H1 (cell line): ENCODE measurements at regions of chr4 and their contacts with region 1.

Region 1: GRCh38 chr4:110344162-110344561 is 131.8 kb upstream of the ENPEP start:
- DNase-seq: no peak
- H3K4me3 ChIP-seq: no peak overlapping the region
- H3K27ac ChIP-seq: no peak overlapping the region
- H3K4me1 ChIP-seq: peaks cover 0 to 2% (median under 1%) of the 10 kb centered on the region in 4 experiments; a peak in 1 of 7 replicates
- H3K27me3 ChIP-seq: no peaks in the 10 kb centered on the region
- CTCF ChIP-seq: peak in 2 of 3 experiments; percentile 26 to 62; a peak in 2 of 4 replicates
- EP300 ChIP-seq: no peak
- POLR2A ChIP-seq: no peak
- RAD21 ChIP-seq: peak; percentile 80 to 83

Region 2: GRCh38 chr4:110005461-110006056 is 338.6 kb before region 1 on chr4:
- CTCF ChIA-PET with region 1: interaction called, 43 read pairs
- POLR2A ChIA-PET with region 1: no interaction called
- DNase-seq: no peak
- H3K4me3 ChIP-seq: no peak overlapping the region
- H3K27ac ChIP-seq: no peak overlapping the region
- H3K4me1 ChIP-seq: 0 out of 7 replicates have a peak, but pooled peaks cover 0 to 2% (median 0%) of the 10 kb centered on the region in 4 experiments
- H3K27me3 ChIP-seq: no peaks in the 10 kb centered on the region
- CTCF ChIP-seq: peak in 2 of 3 experiments; percentile 59 to 69; a peak in 2 of 4 replicates
- EP300 ChIP-seq: no peak
- POLR2A ChIP-seq: no peak
- RAD21 ChIP-seq: peak; percentile 88

Region 3: DNA sequence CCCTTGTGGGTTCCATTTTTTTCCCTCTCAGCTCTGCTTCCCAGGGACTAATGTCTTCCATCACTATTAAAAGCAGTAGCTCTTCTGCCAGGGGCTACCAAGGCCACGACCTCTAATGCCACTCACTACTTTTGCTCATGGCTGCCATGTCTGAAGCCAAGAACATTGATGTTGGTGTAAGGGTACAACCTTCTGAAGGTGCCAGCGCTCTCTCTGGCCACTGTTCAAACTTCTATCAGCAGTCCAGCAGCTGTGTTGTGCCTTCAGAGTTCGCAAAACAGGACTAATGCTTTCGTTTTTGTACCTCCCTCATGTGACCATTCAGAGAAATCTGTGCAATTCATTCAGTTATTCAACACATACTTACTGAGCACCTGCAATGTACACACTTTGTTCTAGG is 10.3 kb after region 1 on chr4:
- CTCF ChIA-PET with region 1: interaction called, 37 read pairs
- POLR2A ChIA-PET with region 1: no interaction called
- DNase-seq: no peak
- H3K4me3 ChIP-seq: no peak overlapping the region
- H3K27ac ChIP-seq: no peak overlapping the region
- H3K4me1 ChIP-seq: no peaks in the 10 kb centered on the region
- H3K27me3 ChIP-seq: no peaks in the 10 kb centered on the region
- CTCF ChIP-seq: no peak
- EP300 ChIP-seq: no peak
- POLR2A ChIP-seq: no peak
- RAD21 ChIP-seq: no peak

Region 4: GRCh38 chr4:110503270-110504083 is 159.3 kb after region 1 on chr4:
- CTCF ChIA-PET with region 1: interaction called, 497 read pairs
- POLR2A ChIA-PET with region 1: interaction called, 3 read pairs
- DNase-seq: no peak
- H3K4me3 ChIP-seq: no peak overlapping the region
- H3K27ac ChIP-seq: no peak overlapping the region
- H3K4me1 ChIP-seq: peaks cover 0 to 4% (median 0%) of the 10 kb centered on the region in 4 experiments; a peak in 2 of 7 replicates
- H3K27me3 ChIP-seq: no peaks in the 10 kb centered on the region
- CTCF ChIP-seq: peak in 2 of 3 experiments; percentile 2 to 5; a peak in 1 of 4 replicates
- EP300 ChIP-seq: no peak
- POLR2A ChIP-seq: no peak
- RAD21 ChIP-seq: peak in 1 of 2 experiments; percentile 8; a peak in 1 of 4 replicates